ENCODE measurements at regions of chr2 and their contacts with region 1.

Region 1: GRCh38 chr2:63841254-63842022 is at the start of gene UGP2:
- DNase-seq: peak; percentile 68 to 89 (median 83)
- ATAC-seq: peak; percentile 77
- H3K4me3 ChIP-seq: peak within 1 kb of the TSS; percentile 82
- H3K4me3 Mint-ChIP-seq: peak within 1 kb of the TSS; percentile 97 to 100 (median 99)
- H3K27ac ChIP-seq: peak within 1 kb of the TSS; percentile 90
- H3K27ac Mint-ChIP-seq: peak within 1 kb of the TSS; percentile 95 to 99 (median 97)
- H3K4me1 ChIP-seq: peaks cover 5 to 24% of the 10 kb centered on the region in 2 donors
- H3K4me1 Mint-ChIP-seq: peaks cover 27 to 60% (median 53%) of the 10 kb centered on the region in 7 donors
- H3K27me3 ChIP-seq: no peaks in the 10 kb centered on the region
- H3K27me3 Mint-ChIP-seq: peaks cover 0 to 14% (median 0%) of the 10 kb centered on the region in 5 donors
- total RNA-seq, gene UGP2: 69.5 to 134 (median 92.4) TPM

Region 2: GRCh38 chr2:61888267-61889055 is 1953.0 kb before region 1 on chr2 and contains the start of gene CCT4:
- CTCF ChIA-PET with region 1: no interaction called
- POLR2A ChIA-PET with region 1: no interaction called
- intact Hi-C with region 1: loop called in 1 of 2 experiments (anchors 5 kb)
- DNase-seq: peak; percentile 86 to 99 (median 95)
- ATAC-seq: peak; percentile 94
- H3K4me3 ChIP-seq: peak within 1 kb of the TSS; percentile 92
- H3K4me3 Mint-ChIP-seq: peak within 1 kb of the TSS; percentile 85 to 100 (median 99)
- H3K27ac ChIP-seq: peak within 1 kb of the TSS; percentile 98
- H3K27ac Mint-ChIP-seq: peak within 1 kb of the TSS; percentile 98 to 100 (median 100)
- H3K4me1 ChIP-seq: peaks cover 15 to 17% of the 10 kb centered on the region in 2 donors
- H3K4me1 Mint-ChIP-seq: peaks cover 11 to 34% (median 29%) of the 10 kb centered on the region in 7 donors
- H3K27me3 ChIP-seq: no peaks in the 10 kb centered on the region
- H3K27me3 Mint-ChIP-seq: no peaks in the 10 kb centered on the region
- total RNA-seq, gene CCT4: 84.2 to 177 (median 90.3) TPM

Region 3: DNA sequence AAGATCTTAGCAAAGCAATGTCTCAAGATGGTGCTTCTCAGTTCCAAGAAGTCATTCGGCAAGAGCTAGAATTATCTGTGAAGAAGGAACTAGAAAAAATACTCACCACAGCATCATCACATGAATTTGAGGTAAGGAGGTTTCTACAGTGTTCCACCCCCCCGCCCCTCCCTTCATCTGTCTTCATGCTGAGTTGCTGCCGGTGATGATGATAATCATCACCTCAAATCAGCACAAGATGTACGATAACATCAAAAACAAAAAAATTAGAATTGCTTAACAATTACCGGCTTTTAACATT is 14.8 kb after region 1 on chr2:
- CTCF ChIA-PET with region 1: interaction called, 7 read pairs
- POLR2A ChIA-PET with region 1: interaction called, 120 read pairs
- intact Hi-C with region 1: loop called (anchors 1 kb)
- DNase-seq: peak in 7 of 9 donors; percentile 54 to 87 (median 78)
- ATAC-seq: peak; percentile 93
- H3K4me3 ChIP-seq: peak overlapping the region; percentile 28
- H3K4me3 Mint-ChIP-seq: peak overlapping the region; percentile 42 to 78 (median 73)
- H3K27ac ChIP-seq: peak overlapping the region; percentile 81
- H3K27ac Mint-ChIP-seq: peak overlapping the region; percentile 85 to 97 (median 93)
- H3K4me1 ChIP-seq: peaks cover 27 to 36% of the 10 kb centered on the region in 2 donors
- H3K4me1 Mint-ChIP-seq: peaks cover 40 to 73% (median 71%) of the 10 kb centered on the region in 7 donors
- H3K27me3 ChIP-seq: no peaks in the 10 kb centered on the region
- H3K27me3 Mint-ChIP-seq: no peaks in the 10 kb centered on the region

Region 4: GRCh38 chr2:63888490-63889402 is 47.3 kb after region 1 on chr2:
- CTCF ChIA-PET with region 1: no interaction called
- POLR2A ChIA-PET with region 1: interaction called, 3 read pairs
- intact Hi-C with region 1: loop called (anchors 1 to 2 kb)
- DNase-seq: peak in 8 of 9 donors; percentile 16 to 44 (median 32)
- ATAC-seq: peak; percentile 81
- H3K4me3 ChIP-seq: no peak overlapping the region
- H3K4me3 Mint-ChIP-seq: no peak overlapping the region
- H3K27ac ChIP-seq: no peak overlapping the region
- H3K27ac Mint-ChIP-seq: peak overlapping the region in 7 of 9 donors; percentile 9 to 71 (median 42)
- H3K4me1 ChIP-seq: no peaks in the 10 kb centered on the region
- H3K4me1 Mint-ChIP-seq: peaks cover 0 to 8% (median 0%) of the 10 kb centered on the region in 7 donors
- H3K27me3 ChIP-seq: no peaks in the 10 kb centered on the region
- H3K27me3 Mint-ChIP-seq: no peaks in the 10 kb centered on the region

Region 5: GRCh38 chr2:64228126-64228678 is 386.8 kb after region 1 on chr2:
- CTCF ChIA-PET with region 1: no interaction called
- POLR2A ChIA-PET with region 1: no interaction called
- intact Hi-C with region 1: loop called in 1 of 2 experiments (anchors 10 kb)
- DNase-seq: peak in 8 of 9 donors; percentile 38 to 61 (median 57)
- ATAC-seq: peak; percentile 94
- H3K4me3 ChIP-seq: peak overlapping the region; percentile 48
- H3K4me3 Mint-ChIP-seq: peak overlapping the region; percentile 86 to 100 (median 95)
- H3K27ac ChIP-seq: peak overlapping the region; percentile 78
- H3K27ac Mint-ChIP-seq: peak overlapping the region; percentile 83 to 99 (median 95)
- H3K4me1 ChIP-seq: peaks cover 0 to 15% of the 10 kb centered on the region in 2 donors
- H3K4me1 Mint-ChIP-seq: peaks cover 16 to 45% (median 38%) of the 10 kb centered on the region in 7 donors
- H3K27me3 ChIP-seq: no peaks in the 10 kb centered on the region
- H3K27me3 Mint-ChIP-seq: no peaks in the 10 kb centered on the region

Region 6: DNA sequence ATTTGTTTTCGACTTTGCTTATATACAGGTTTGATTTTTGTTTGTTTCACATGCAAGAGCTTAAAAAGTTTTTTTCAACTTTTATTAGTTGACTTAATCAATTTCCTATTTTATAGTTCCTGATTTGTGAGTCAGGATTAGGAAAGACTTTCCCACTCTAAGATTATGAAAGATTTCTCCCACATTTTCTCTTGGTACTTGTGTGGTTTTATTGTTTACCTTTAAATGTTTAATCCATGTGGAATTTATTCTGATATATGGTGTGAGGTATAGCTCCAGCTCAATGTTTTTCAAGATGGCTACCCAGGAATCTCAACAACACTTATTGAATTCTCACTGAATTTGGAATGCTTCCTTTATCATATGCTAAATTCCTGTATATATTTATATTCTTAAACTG is 494.7 kb after region 1 on chr2:
- CTCF ChIA-PET with region 1: no interaction called
- POLR2A ChIA-PET with region 1: no interaction called
- intact Hi-C with region 1: no loop called
- DNase-seq: no peak
- ATAC-seq: no peak
- H3K4me3 ChIP-seq: no peak overlapping the region
- H3K4me3 Mint-ChIP-seq: no peak overlapping the region
- H3K27ac ChIP-seq: no peak overlapping the region
- H3K27ac Mint-ChIP-seq: no peak overlapping the region
- H3K4me1 ChIP-seq: no peaks in the 10 kb centered on the region
- H3K4me1 Mint-ChIP-seq: peaks cover 0 to 11% (median 0%) of the 10 kb centered on the region in 7 donors
- H3K27me3 ChIP-seq: no peaks in the 10 kb centered on the region
- H3K27me3 Mint-ChIP-seq: peaks cover 0 to 8% (median 0%) of the 10 kb centered on the region in 5 donors

Region 7: DNA sequence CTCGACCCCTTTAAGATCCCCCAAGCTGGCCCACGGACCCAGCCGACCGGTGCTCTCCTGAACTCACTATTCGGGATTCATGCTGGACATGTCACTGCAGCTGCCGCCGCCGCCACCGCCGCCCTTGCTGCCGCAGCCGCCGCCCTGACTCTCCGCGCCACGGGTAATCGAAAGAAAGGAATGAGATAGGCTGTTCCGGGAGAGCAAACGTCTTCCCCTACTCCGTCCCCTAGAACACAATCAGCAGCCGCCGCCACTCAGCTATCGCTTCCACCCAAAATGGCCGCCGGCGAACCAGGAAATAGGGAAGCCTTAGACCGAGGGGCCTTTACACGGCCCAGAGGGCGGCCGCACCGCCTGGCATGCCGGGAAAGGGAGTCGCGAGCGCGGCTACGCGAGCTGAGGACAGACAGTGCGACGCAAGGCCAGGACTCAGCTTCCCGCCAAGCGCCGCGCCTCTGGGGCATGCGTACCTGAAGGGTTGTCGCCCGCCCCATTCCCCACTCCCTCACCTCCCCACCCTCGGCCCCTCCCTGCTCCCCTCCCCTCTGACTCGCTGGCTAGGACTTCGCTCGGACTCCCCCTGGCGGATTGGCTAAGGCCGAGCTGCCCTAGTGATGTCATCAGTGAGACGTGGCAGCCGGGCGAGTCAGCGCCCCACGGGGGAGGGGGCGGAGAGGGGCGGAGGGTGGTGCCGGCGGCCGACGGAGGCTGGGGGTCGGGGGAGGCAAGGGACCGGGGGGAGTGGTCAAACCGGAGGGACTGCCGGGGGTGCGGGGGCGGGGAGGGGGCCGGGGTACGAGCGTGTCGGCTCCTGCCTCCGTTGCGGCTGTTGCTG is 1288.6 kb after region 1 on chr2 and contains the start of gene RAB1A:
- CTCF ChIA-PET with region 1: no interaction called
- POLR2A ChIA-PET with region 1: no interaction called
- intact Hi-C with region 1: loop called (anchors 1 kb)
- DNase-seq: peak; percentile 91 to 99 (median 98)
- ATAC-seq: peak; percentile 94
- H3K4me3 ChIP-seq: peak within 1 kb of the TSS; percentile 78
- H3K4me3 Mint-ChIP-seq: peak within 1 kb of the TSS; percentile 90 to 100 (median 98)
- H3K27ac ChIP-seq: peak within 1 kb of the TSS; percentile 98
- H3K27ac Mint-ChIP-seq: peak within 1 kb of the TSS; percentile 95 to 100 (median 99)
- H3K4me1 ChIP-seq: peaks cover 24 to 25% of the 10 kb centered on the region in 2 donors
- H3K4me1 Mint-ChIP-seq: peaks cover 24 to 47% (median 35%) of the 10 kb centered on the region in 7 donors
- H3K27me3 ChIP-seq: no peaks in the 10 kb centered on the region
- H3K27me3 Mint-ChIP-seq: peaks cover 0 to 17% (median 0%) of the 10 kb centered on the region in 5 donors
- total RNA-seq, gene RAB1A: 48.8 to 78.6 (median 65.8) TPM